Tibial artery (tissue), 4 donors: ENCODE measurements at regions of chr2 and their contacts with region 1.

Region 1: DNA sequence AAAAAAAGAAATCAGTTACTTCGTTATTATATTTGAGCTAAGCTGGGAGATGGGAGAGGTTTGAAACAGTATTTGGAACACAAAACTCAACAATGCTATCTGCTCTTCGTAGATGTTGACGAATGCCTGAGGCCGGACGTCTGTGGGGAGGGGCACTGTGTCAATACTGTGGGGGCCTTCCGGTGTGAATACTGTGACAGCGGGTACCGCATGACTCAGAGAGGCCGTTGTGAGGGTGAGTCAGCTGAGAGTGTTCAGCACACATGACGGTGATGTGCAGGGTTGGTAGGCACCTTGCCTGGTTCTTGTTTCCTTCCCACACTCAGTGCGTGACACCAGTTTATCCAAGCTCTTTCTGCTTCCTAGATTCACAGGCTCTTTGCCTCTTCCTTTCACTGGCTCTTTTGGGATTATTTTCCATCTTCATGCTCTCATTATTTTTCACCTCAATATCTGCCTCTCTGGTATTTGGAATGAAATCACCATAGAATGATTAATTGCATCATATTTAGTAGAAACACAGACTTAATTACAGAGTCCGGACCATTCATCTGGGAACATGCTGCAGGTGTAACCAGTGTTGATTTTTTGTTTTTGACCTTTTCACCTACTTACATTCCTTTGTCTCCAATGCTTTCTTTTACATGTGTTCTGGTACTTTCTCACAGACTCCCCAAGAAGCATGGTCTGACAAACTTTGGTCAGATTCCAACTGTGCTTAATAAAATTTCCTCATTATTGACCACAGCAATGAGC is 200.6 kb upstream of the RASGRP3 start:
- DNase-seq: peak; percentile 78 to 91
- H3K4me3 ChIP-seq: no peak overlapping the region
- H3K27ac ChIP-seq: peak overlapping the region; percentile 90 to 92
- H3K4me1 ChIP-seq: peaks cover 0 to 65% (median 23%) of the 10 kb centered on the region in 4 donors
- H3K27me3 ChIP-seq: no peaks in the 10 kb centered on the region
- CTCF ChIP-seq: no peak

Region 2: DNA sequence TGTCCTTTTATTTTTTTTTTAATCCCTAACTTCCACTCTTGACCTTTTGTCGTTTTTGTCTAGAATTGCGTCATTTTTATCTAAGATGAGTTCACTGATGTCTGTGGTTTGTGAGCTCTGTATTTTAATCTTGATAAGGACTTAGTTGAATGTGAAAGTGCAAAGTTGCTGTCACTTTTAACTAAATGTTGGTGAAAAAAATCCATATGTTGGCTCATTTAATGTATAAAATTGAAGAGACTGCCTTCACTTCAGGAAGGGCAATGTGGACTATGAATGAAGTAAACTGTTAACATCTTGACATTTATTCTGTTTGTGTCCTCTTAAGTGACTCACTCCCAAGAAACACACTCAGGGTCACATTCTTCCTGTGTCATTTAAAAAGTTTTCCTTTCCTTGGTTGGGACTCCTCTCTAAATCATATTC is 56.0 kb before region 1 on chr2:
- intact Hi-C with region 1: loop called (anchors 10 kb)
- DNase-seq: no peak
- H3K4me3 ChIP-seq: no peak overlapping the region
- H3K27ac ChIP-seq: peak overlapping the region; percentile 85 to 90
- H3K4me1 ChIP-seq: peaks cover 0 to 97% (median 56%) of the 10 kb centered on the region in 4 donors
- H3K27me3 ChIP-seq: no peaks in the 10 kb centered on the region
- CTCF ChIP-seq: no peak